Activated CD4-positive, alpha-beta T cell treated with anti-CD3 and anti-CD28 coated beads for 36 hours (primary cell): ENCODE measurements at regions of chr9 and their contacts with region 1.

Region 1: GRCh38 chr9:77433675-77434445 is 214.3 kb downstream of the GNA14 start:
- DNase-seq: peak; percentile 77
- ATAC-seq: peak; percentile 99
- H3K4me3 Mint-ChIP-seq: no peak overlapping the region
- H3K27ac Mint-ChIP-seq: no peak overlapping the region
- H3K4me1 Mint-ChIP-seq: peaks cover 3% of the 10 kb centered on the region
- H3K27me3 Mint-ChIP-seq: no peaks in the 10 kb centered on the region

Region 2: GRCh38 chr9:76798527-76798926 is 635.3 kb before region 1 on chr9:
- CTCF ChIA-PET with region 1: no interaction called
- POLR2A ChIA-PET with region 1: no interaction called
- intact Hi-C with region 1: no loop called
- DNase-seq: no peak
- ATAC-seq: no peak
- H3K4me3 Mint-ChIP-seq: no peak overlapping the region
- H3K27ac Mint-ChIP-seq: no peak overlapping the region
- H3K4me1 Mint-ChIP-seq: no peaks in the 10 kb centered on the region
- H3K27me3 Mint-ChIP-seq: peaks cover 4% of the 10 kb centered on the region

Region 3: GRCh38 chr9:77417566-77417965 is 16.3 kb before region 1 on chr9:
- CTCF ChIA-PET with region 1: interaction called, 12 read pairs
- POLR2A ChIA-PET with region 1: no interaction called
- intact Hi-C with region 1: no loop called
- DNase-seq: no peak
- ATAC-seq: no peak
- H3K4me3 Mint-ChIP-seq: no peak overlapping the region
- H3K27ac Mint-ChIP-seq: no peak overlapping the region
- H3K4me1 Mint-ChIP-seq: no peaks in the 10 kb centered on the region
- H3K27me3 Mint-ChIP-seq: no peaks in the 10 kb centered on the region

Region 4: DNA sequence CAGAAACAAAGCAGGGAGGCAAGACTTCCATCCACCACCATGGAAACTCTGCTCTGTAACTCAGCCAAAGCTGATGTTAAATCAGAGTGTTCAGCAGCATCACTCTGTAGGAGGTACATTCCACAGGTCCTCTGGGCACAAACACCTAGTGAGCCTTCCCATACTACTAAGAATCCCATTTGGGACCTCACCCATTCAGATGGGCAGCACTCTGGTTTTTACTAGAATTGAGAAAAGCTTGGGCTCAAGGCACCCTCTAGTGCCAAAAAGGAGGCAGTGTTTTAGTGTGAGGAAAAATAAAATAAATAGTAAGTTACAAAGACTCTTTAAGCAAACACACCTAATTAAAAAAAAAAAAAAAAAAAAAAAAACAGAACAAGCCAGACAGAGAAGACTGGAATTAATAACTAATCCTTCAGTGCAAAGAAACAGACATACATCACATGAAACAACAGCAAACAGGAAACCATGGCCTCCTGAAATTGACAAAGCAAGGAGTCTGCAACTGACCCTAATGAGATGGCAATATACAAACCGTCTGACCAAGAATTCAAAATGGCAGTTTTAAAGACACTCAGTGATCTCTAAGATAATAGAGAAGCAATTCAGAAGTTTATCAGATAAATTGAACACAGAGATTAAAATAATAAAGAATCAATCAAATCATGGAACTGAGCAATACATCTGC is 54.7 kb after region 1 on chr9:
- CTCF ChIA-PET with region 1: interaction called, 6 read pairs
- POLR2A ChIA-PET with region 1: no interaction called
- intact Hi-C with region 1: loop called (anchors 1 to 2 kb)
- DNase-seq: no peak
- ATAC-seq: peak; percentile 45
- H3K4me3 Mint-ChIP-seq: peak overlapping the region; percentile 57
- H3K27ac Mint-ChIP-seq: no peak overlapping the region
- H3K4me1 Mint-ChIP-seq: peaks cover 20% of the 10 kb centered on the region
- H3K27me3 Mint-ChIP-seq: peaks cover 3% of the 10 kb centered on the region

Region 5: GRCh38 chr9:77648234-77649120 is 214.6 kb after region 1 on chr9 and contains the start of gene GNA14:
- CTCF ChIA-PET with region 1: interaction called, 3 read pairs
- POLR2A ChIA-PET with region 1: no interaction called
- intact Hi-C with region 1: loop called in 1 of 2 experiments (anchors 5 kb)
- DNase-seq: peak; percentile 46
- ATAC-seq: peak; percentile 23
- H3K4me3 Mint-ChIP-seq: peak within 1 kb of the TSS; percentile 65
- H3K27ac Mint-ChIP-seq: no peak within 1 kb of the TSS
- H3K4me1 Mint-ChIP-seq: peaks cover 11% of the 10 kb centered on the region
- H3K27me3 Mint-ChIP-seq: peaks cover 38% of the 10 kb centered on the region
- total RNA-seq, gene GNA14: 0.11 to 0.54 TPM

Region 6: DNA sequence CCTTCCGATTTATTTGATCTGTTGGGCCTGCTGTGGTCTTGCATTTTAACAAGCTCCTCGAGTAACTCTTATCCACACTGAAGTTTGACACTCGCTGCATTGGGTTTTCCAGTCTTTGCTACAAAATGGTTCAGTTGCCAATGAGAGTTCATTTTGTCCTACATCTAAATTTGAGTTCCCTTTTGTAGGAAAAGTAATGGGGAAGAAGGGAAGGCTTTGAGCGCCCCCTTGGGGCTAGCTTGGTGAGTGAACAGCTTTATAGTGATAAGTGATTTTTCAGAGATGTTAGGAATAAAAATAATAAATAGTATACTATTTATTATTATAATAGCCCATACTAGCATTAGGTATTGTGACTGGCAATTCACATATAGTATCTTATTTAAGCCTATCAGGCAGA is 687.6 kb after region 1 on chr9:
- CTCF ChIA-PET with region 1: no interaction called
- POLR2A ChIA-PET with region 1: no interaction called
- intact Hi-C with region 1: loop called (anchors 2 to 5 kb)
- DNase-seq: peak; percentile 79
- ATAC-seq: no peak
- H3K4me3 Mint-ChIP-seq: no peak overlapping the region
- H3K27ac Mint-ChIP-seq: no peak overlapping the region
- H3K4me1 Mint-ChIP-seq: peaks cover 37% of the 10 kb centered on the region
- H3K27me3 Mint-ChIP-seq: no peaks in the 10 kb centered on the region

Region 7: GRCh38 chr9:78171651-78172050 is 737.8 kb after region 1 on chr9:
- CTCF ChIA-PET with region 1: no interaction called
- POLR2A ChIA-PET with region 1: no interaction called
- intact Hi-C with region 1: no loop called
- DNase-seq: no peak
- ATAC-seq: no peak
- H3K4me3 Mint-ChIP-seq: no peak overlapping the region
- H3K27ac Mint-ChIP-seq: no peak overlapping the region
- H3K4me1 Mint-ChIP-seq: no peaks in the 10 kb centered on the region
- H3K27me3 Mint-ChIP-seq: no peaks in the 10 kb centered on the region

Region 8: GRCh38 chr9:78612091-78612490 is 1178.2 kb after region 1 on chr9:
- CTCF ChIA-PET with region 1: no interaction called
- POLR2A ChIA-PET with region 1: no interaction called
- intact Hi-C with region 1: no loop called
- DNase-seq: no peak
- ATAC-seq: no peak
- H3K4me3 Mint-ChIP-seq: no peak overlapping the region
- H3K27ac Mint-ChIP-seq: no peak overlapping the region
- H3K4me1 Mint-ChIP-seq: no peaks in the 10 kb centered on the region
- H3K27me3 Mint-ChIP-seq: no peaks in the 10 kb centered on the region